CD8-positive, alpha-beta T cell (primary cell): ENCODE measurements at regions of chr2 and their contacts with region 1.

Region 1: DNA sequence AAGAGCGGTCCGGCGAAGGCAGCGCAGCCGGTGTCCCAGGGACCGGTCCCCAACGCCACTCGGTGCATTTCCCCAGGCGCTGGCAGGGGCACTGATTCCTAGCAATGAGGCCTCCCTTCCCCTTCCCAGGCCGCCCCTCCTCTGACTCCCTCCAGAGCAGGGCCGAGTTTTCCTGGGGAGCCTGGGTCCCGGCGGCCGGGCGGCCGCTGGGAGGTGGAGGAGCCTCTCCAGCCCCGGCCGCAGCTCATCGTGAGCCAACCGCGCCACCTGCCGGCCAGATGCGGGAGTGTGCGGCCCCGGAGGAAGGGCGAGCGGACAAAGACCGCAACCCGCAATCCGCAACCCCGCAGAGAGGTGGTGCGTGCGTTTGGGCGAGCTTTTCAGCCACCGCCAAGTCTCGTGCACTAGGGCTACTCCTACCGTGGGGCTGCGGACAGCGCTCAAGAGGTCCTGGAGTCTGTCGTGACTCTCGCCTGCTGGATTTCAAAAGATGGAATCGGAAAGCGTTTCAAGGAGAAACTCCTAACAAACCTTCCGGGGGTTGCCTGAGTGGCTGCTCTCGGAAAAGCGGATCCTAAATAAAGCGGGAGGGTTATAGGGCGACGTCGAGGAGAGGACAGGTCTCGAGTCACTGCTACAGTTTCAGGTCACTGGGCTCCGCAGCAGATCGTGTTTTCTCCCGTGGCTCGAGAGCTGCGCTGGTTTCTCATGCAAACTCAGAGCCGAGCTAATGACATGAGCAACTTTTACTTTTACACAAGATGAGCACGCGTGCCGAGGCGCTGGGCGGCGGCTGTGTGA is 1.5 kb upstream of the EPHA4 start:
- DNase-seq: peak; percentile 60 to 90 (median 81)
- ATAC-seq: peak; percentile 42
- H3K4me3 ChIP-seq: peak overlapping the region; percentile 71 to 92
- H3K4me3 Mint-ChIP-seq: peak overlapping the region; percentile 83
- H3K27ac ChIP-seq: no peak overlapping the region
- H3K27ac Mint-ChIP-seq: no peak overlapping the region
- H3K4me1 ChIP-seq: peaks cover 33% of the 10 kb centered on the region
- H3K4me1 Mint-ChIP-seq: peaks cover 29% of the 10 kb centered on the region
- H3K27me3 ChIP-seq: peaks cover 15 to 21% of the 10 kb centered on the region in 2 experiments
- H3K27me3 Mint-ChIP-seq: peaks cover 50% of the 10 kb centered on the region
- CTCF ChIP-seq: peak; percentile 95

Region 2: DNA sequence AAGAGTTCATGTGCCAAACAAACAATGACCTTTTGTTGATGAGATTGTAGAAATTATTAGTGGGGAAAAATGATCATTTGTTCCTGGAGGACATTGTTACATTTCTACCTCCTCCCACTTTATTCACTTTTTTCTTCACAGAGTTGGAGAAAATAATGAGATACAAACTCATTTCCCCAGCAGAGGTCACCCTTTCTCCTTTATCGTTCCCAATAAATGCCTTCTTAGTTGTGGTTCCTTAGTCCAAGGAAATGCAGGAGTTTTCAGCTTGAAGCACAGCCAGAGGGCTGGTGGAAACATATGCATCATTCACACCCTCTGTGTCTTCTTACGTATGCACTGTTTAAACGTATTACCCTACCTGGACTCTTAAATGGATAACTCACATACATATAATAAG is 1837.4 kb before region 1 on chr2:
- CTCF ChIA-PET with region 1: interaction called, 5 read pairs
- POLR2A ChIA-PET with region 1: no interaction called
- intact Hi-C with region 1: loop called in 1 of 2 experiments (anchors 1 kb)
- DNase-seq: peak in 2 of 9 experiments; percentile 6 to 31
- ATAC-seq: no peak
- H3K4me3 ChIP-seq: no peak overlapping the region
- H3K4me3 Mint-ChIP-seq: no peak overlapping the region
- H3K27ac ChIP-seq: no peak overlapping the region
- H3K27ac Mint-ChIP-seq: no peak overlapping the region
- H3K4me1 ChIP-seq: no peaks in the 10 kb centered on the region
- H3K4me1 Mint-ChIP-seq: no peaks in the 10 kb centered on the region
- H3K27me3 ChIP-seq: no peaks in the 10 kb centered on the region
- H3K27me3 Mint-ChIP-seq: peaks cover 27% of the 10 kb centered on the region
- CTCF ChIP-seq: peak; percentile 17

Region 3: DNA sequence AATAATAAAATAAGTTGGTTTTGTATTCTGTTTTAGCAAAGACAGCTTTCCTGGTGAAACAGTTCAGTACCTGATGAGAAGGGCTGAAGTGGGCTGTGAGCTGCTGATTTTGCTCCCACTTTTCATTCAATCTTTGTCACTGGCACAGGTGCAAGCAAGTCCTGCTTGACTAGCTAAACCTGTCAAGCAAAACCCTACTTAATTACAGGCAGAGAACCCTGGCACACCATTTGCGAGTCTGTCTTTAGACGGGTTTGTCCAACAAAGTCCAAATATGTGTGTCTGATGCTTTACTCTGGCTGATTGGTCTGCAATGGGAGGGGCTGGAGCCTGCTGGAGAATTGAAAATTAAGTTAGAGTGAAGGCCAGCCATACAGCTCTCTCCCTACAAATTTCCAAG is 268.7 kb before region 1 on chr2:
- CTCF ChIA-PET with region 1: interaction called, 3 read pairs
- POLR2A ChIA-PET with region 1: no interaction called
- intact Hi-C with region 1: loop called in 1 of 2 experiments (anchors 1 kb)
- DNase-seq: no peak
- ATAC-seq: no peak
- H3K4me3 ChIP-seq: no peak overlapping the region
- H3K4me3 Mint-ChIP-seq: no peak overlapping the region
- H3K27ac ChIP-seq: no peak overlapping the region
- H3K27ac Mint-ChIP-seq: no peak overlapping the region
- H3K4me1 ChIP-seq: no peaks in the 10 kb centered on the region
- H3K4me1 Mint-ChIP-seq: no peaks in the 10 kb centered on the region
- H3K27me3 ChIP-seq: no peaks in the 10 kb centered on the region
- H3K27me3 Mint-ChIP-seq: peaks cover 2% of the 10 kb centered on the region
- CTCF ChIP-seq: no peak

Region 4: GRCh38 chr2:221502270-221503010 is 71.2 kb before region 1 on chr2:
- CTCF ChIA-PET with region 1: interaction called, 20 read pairs
- POLR2A ChIA-PET with region 1: interaction called, 3 read pairs
- intact Hi-C with region 1: loop called (anchors 1 to 5 kb)
- DNase-seq: no peak
- ATAC-seq: no peak
- H3K4me3 ChIP-seq: no peak overlapping the region
- H3K4me3 Mint-ChIP-seq: no peak overlapping the region
- H3K27ac ChIP-seq: no peak overlapping the region
- H3K27ac Mint-ChIP-seq: no peak overlapping the region
- H3K4me1 ChIP-seq: no peaks in the 10 kb centered on the region
- H3K4me1 Mint-ChIP-seq: peaks cover 13% of the 10 kb centered on the region
- H3K27me3 ChIP-seq: no peaks in the 10 kb centered on the region
- H3K27me3 Mint-ChIP-seq: no peaks in the 10 kb centered on the region
- CTCF ChIP-seq: no peak

Region 5: DNA sequence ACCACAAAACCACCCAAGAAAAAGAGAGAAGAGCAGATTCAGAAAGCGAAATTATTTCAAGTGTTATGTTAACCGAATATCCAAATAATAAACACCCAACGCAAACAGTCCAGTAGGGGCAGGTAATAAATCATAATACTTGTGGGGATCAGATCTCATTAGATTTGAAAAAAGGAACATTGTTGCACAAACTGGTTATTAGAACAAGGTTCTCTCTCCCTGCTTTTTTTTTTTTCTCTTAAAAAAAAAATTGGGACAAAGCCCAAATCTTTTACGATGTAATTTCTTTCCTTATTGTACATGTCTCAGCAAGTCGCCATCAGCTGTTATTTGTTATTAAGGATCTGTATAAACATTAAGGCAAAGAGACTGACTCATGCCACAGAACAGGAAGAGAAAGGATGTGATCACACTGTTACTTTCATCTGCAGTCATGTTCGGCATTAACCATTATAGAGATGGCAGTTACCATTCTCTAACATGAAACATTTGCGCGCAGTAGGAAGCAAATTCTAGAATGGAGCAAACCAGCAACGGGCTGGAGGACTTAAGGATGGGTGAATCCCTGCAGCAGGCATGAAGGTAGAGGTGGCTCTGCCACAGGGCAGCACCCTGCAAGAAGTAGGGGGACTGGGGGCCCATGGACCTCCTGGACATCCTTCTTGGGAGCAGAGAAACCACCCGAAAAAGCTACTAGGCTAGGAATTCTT is 43.5 kb before region 1 on chr2:
- CTCF ChIA-PET with region 1: no interaction called
- POLR2A ChIA-PET with region 1: no interaction called
- intact Hi-C with region 1: loop called in 1 of 2 experiments (anchors 5 kb)
- DNase-seq: peak in 2 of 9 experiments; percentile 34 to 50
- ATAC-seq: peak; percentile 54
- H3K4me3 ChIP-seq: peak overlapping the region in 1 of 2 experiments; percentile 19
- H3K4me3 Mint-ChIP-seq: peak overlapping the region; percentile 71
- H3K27ac ChIP-seq: peak overlapping the region in 1 of 2 experiments; percentile 64
- H3K27ac Mint-ChIP-seq: peak overlapping the region; percentile 80
- H3K4me1 ChIP-seq: no peaks in the 10 kb centered on the region
- H3K4me1 Mint-ChIP-seq: peaks cover 35% of the 10 kb centered on the region
- H3K27me3 ChIP-seq: no peaks in the 10 kb centered on the region
- H3K27me3 Mint-ChIP-seq: no peaks in the 10 kb centered on the region
- CTCF ChIP-seq: no peak